OCI-LY7 (cell line): ENCODE measurements at regions of chr2 and their contacts with region 1.

Region 1: GRCh38 chr2:209340522-209340921 is 83.3 kb upstream of the MAP2 start:
- DNase-seq: no peak
- H3K4me3 ChIP-seq: no peak overlapping the region
- H3K27ac ChIP-seq: no peak overlapping the region
- H3K4me1 ChIP-seq: no peaks in the 10 kb centered on the region
- CTCF ChIP-seq: no peak

Region 2: GRCh38 chr2:209423562-209424198 is 83.2 kb after region 1 on chr2 and contains the start of gene MAP2:
- CTCF ChIA-PET with region 1: no interaction called
- POLR2A ChIA-PET with region 1: no interaction called
- intact Hi-C with region 1: loop called (anchors 5 kb)
- DNase-seq: peak; percentile 16
- H3K4me3 ChIP-seq: peak within 1 kb of the TSS; percentile 40
- H3K27ac ChIP-seq: no peak within 1 kb of the TSS
- H3K4me1 ChIP-seq: no peaks in the 10 kb centered on the region
- CTCF ChIP-seq: peak; percentile 30; the same call in 1 of the 2 replicates
- total RNA-seq, gene MAP2: 2.3 TPM in 1 of 2 replicates, not detected in the other